ENCODE measurements at regions of chr1 and their contacts with region 1.

Region 1: DNA sequence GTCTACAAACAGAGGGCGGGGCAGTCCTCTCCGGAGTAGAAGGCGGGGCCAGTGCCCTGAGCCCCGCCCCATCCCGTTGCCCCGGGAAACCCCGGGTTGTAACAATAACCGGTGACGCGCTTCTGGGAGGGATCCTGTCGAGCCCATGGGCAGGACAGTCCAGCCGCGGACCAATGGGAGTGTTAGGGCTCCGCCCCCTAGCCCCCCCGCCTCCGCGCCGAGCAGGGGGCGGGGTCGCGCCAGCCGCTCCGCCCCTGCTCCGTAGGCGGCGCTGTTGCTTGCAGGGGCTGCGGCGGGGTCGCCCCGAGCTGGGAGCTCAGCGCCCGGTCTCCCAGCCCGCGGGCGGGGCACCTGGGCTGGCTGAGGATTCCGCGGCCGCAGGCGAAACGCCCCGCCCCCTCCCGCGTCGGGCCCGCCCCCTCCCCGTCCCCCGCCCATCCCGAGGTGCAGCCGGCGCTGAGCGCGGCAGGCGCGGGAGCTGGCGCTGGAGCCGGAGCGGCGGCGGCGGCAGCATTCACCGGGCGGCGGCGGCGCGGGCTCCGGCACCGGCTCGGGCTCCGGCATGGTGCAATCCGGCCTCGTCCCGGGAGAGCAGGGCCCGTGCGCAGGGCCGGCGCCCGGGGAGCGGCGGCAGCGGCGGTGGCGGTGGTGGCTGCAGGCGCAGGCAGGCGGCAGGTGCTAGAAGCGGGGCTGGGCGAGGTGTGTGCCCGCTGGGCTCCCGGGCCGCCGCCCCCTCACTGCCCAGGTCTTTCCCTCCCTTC is at the start of gene FOXO6:
- DNase-seq: peak; percentile 99
- H3K4me3 ChIP-seq: peak within 1 kb of the TSS; percentile 55 to 77
- H3K27ac ChIP-seq: peak within 1 kb of the TSS; percentile 51 to 58
- H3K4me1 ChIP-seq: peaks cover 0 to 63% (median 46%) of the 10 kb centered on the region in 4 donors
- H3K27me3 ChIP-seq: peaks cover 0 to 1% of the 10 kb centered on the region in 2 donors
- CTCF ChIP-seq: peak; percentile 34 to 35

Region 2: DNA sequence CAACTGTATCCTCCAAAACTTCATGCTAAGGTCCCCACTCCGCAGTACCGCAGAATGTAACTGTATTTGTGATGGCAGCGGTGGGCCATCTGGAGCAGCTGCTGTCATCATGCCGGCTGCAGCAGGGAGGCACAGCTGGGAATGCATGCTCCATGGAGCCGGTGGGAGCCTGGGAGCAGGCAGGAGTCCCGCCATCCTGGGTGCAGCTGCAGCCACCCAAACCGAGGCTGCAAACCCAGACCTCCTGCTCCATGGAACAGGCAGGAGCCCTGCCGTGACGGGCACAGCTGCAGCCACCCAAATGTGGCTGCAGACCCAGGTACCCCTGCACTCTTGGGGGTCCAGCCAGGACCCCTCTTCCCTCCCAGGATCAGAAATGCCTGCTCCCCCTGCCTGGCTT is 199.3 kb before region 1 on chr1:
- intact Hi-C with region 1: no loop called
- DNase-seq: no peak
- H3K4me3 ChIP-seq: no peak overlapping the region
- H3K27ac ChIP-seq: no peak overlapping the region
- H3K4me1 ChIP-seq: no peaks in the 10 kb centered on the region
- H3K27me3 ChIP-seq: no peaks in the 10 kb centered on the region
- CTCF ChIP-seq: no peak

Region 3: GRCh38 chr1:41255978-41256377 is 105.2 kb before region 1 on chr1:
- intact Hi-C with region 1: no loop called
- DNase-seq: no peak
- H3K4me3 ChIP-seq: no peak overlapping the region
- H3K27ac ChIP-seq: no peak overlapping the region
- H3K4me1 ChIP-seq: no peaks in the 10 kb centered on the region
- H3K27me3 ChIP-seq: peaks cover 0 to 2% of the 10 kb centered on the region in 2 donors
- CTCF ChIP-seq: no peak

Region 4: DNA sequence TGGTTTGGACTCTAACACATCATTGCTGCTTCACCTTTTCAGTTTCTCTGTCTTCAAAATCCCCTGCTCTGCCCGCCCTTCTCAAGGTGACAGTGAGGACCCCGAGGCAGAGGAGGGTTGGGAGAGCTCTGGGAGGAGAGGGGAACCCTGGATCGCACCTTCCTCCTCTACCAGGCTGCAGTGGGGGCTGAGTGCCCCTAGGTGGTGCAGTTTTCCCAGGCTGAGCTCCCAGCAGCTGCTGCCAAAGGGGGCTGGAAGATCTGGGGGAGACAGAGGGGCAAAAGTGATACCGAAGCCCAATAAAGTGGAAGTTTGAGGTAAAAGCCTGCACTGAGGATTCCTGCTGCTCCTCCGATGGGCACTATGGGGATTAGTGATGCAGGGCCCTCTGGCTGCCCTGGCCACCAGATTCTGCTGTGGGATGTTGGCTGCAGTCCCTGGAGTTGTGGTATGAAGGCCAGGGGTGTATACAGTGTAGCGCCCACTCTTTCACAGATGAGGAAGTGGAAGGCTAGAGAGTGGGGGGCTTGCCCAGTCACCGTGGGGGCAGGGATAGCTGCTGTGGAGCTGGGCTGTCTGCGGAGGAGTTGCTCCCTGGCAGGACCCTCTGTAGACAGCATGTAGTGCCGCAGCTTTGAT is 78.4 kb before region 1 on chr1:
- intact Hi-C with region 1: loop called (anchors 5 kb)
- DNase-seq: peak in 1 of 2 donors; percentile 26
- H3K4me3 ChIP-seq: no peak overlapping the region
- H3K27ac ChIP-seq: no peak overlapping the region
- H3K4me1 ChIP-seq: peaks cover 0 to 4% (median 0%) of the 10 kb centered on the region in 4 donors
- H3K27me3 ChIP-seq: peaks cover 0 to 58% of the 10 kb centered on the region in 2 donors
- CTCF ChIP-seq: peak; percentile 82 to 86

Region 5: DNA sequence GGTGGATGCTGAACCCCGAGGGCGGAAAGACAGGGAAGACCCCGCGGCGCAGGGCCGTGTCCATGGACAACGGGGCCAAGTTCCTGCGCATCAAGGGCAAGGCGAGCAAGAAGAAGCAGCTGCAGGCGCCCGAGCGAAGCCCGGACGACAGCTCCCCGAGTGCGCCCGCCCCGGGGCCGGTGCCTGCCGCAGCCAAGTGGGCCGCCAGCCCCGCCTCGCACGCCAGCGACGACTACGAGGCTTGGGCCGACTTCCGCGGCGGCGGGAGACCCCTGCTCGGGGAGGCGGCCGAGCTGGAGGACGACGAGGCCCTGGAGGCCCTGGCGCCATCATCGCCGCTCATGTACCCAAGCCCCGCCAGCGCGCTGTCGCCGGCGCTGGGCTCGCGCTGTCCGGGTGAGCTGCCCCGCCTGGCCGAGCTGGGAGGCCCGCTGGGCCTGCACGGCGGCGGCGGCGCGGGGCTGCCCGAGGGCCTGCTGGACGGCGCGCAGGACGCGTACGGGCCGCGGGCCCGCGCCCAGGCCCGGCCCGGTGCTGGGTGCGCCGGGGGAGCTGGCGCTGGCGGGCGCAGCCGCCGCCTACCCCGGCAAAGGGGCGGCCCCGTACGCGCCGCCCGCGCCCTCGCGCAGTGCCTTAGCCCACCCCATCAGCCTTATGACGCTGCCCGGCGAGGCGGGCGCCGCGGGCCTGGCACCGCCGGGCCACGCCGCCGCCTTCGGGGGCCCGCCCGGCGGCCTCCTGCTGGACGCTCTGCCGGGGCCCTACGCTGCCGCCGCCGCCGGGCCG is 20.7 kb after region 1 on chr1:
- intact Hi-C with region 1: loop called (anchors 1 kb)
- DNase-seq: peak; percentile 60 to 82
- H3K4me3 ChIP-seq: peak overlapping the region; percentile 77 to 91
- H3K27ac ChIP-seq: peak overlapping the region; percentile 99
- H3K4me1 ChIP-seq: peaks cover 0 to 51% (median 30%) of the 10 kb centered on the region in 4 donors
- H3K27me3 ChIP-seq: no peaks in the 10 kb centered on the region
- CTCF ChIP-seq: no peak

Region 6: DNA sequence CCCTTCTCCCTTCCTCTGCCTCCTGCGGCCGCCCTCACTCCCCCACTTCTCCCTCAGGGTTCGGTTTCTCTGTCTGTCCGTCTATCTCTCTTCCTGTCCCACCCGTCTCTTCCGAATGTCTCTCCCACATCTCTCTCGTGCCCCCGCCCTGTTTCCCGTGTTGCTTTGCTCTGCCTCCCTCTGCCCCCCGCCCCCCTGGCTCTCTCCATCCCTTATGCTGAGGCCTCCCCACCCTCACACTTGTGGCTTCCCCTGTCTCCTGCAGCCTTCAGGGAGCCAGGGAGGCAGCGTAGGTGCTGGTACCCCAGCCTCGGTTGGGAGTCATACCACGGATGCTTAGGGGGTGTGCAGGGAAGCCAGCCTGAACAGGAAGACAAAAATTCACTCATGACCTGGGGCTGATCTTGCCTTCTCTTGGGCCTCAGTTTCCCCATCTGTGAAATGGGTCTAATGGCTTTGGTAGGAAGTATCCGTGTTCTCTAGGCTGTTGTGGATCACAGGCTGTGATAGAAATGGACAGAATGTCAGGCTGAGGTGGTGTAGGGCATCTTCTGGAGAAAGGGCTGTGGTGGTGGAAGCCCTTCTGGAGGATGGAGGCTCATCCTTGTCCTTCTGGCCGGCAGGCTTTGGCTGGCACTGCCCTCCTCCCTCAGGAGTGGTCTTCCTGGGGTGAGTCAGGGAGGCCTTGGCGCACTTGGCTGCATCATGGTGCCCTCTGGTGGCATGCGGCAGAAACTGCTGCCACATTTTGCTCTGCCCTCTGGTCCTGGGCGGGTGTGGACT is 55.6 kb after region 1 on chr1:
- intact Hi-C with region 1: loop called (anchors 2 kb)
- DNase-seq: peak in 1 of 2 donors; percentile 76
- H3K4me3 ChIP-seq: no peak overlapping the region
- H3K27ac ChIP-seq: no peak overlapping the region
- H3K4me1 ChIP-seq: peaks cover 6 to 19% (median 12%) of the 10 kb centered on the region in 4 donors
- H3K27me3 ChIP-seq: peaks cover 0 to 8% of the 10 kb centered on the region in 2 donors
- CTCF ChIP-seq: peak; percentile 92 to 93

Region 7: DNA sequence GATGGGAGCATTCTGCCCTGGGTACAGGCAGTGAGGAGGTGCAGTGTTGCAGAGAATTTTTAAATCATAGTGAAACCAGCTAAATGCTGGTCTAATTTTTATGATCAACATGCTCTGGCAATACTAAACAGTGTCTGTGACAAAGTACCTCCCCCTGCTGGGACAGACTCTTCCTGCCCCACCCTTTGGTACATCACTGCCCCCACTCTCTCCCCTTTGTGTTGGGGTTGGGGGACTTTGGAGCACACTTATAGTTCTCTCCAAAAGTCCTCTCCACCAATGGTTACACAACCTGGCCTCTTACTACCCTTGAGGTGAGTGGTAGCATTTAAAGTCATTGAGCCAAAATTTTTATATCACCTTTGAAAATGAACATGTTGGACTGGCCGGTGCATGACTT is 743.9 kb after region 1 on chr1:
- intact Hi-C with region 1: no loop called
- DNase-seq: no peak
- H3K4me3 ChIP-seq: no peak overlapping the region
- H3K27ac ChIP-seq: no peak overlapping the region
- H3K4me1 ChIP-seq: no peaks in the 10 kb centered on the region
- H3K27me3 ChIP-seq: peaks cover 0 to 3% of the 10 kb centered on the region in 2 donors
- CTCF ChIP-seq: no peak